ENCODE measurements at regions of chr4 and their contacts with region 1.

Region 1: DNA sequence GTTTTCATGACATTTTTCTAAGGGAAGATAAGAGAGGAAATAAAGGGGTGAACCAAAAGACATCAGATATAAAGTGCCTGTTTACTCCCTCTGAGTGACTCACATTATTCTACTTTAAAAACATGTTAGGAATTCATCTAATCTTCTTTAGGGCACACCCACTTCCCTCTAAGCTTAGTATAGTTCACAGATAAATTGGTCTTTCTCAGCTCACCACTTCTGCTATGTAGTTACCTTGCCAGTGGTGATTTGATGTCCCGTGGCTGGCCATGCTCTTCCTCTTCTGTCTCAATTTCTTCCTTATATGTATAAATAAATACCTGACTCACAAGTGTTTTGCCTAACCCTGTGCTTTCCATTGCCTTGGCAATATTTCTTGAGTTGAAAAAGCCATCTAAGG is 96.8 kb downstream of the PDLIM5 start:
- DNase-seq: peak; percentile 93
- H3K4me3 ChIP-seq: peak overlapping the region in 1 of 3 experiments; percentile 14
- H3K27ac ChIP-seq: peak overlapping the region; percentile 69
- H3K4me1 ChIP-seq: peaks cover 85% of the 10 kb centered on the region
- H3K27me3 ChIP-seq: no peaks in the 10 kb centered on the region
- CTCF ChIP-seq: no peak
- POLR2A ChIP-seq: peak; percentile 38

Region 2: DNA sequence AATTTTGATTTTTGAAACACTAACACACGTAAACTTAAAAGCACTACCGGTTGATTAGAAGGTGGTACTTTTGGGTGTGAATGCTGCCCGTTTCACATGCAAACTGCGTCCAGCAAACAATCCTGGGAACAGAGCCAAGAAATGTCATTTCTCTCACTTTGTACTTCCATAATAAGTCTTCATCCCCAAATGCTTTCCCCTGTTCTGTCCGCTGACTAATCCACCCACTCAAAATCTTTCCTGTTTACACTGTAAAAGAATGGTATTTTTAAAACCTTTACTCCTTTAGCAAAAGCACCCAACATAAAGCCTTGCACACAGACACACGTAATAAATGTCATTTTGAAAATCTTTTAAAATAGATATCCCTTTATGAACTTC is 135.9 kb before region 1 on chr4:
- CTCF ChIA-PET with region 1: interaction called, 9 read pairs
- POLR2A ChIA-PET with region 1: no interaction called
- dilution Hi-C with region 1: no loop called
- intact Hi-C with region 1: loop called (anchors 2 kb)
- DNase-seq: peak; percentile 95
- H3K4me3 ChIP-seq: peak overlapping the region in 1 of 3 experiments; percentile 65
- H3K27ac ChIP-seq: peak overlapping the region; percentile 65
- H3K4me1 ChIP-seq: peaks cover 33% of the 10 kb centered on the region
- H3K27me3 ChIP-seq: no peaks in the 10 kb centered on the region
- CTCF ChIP-seq: no peak
- POLR2A ChIP-seq: no peak

Region 3: GRCh38 chr4:94451695-94452475 is 96.7 kb before region 1 on chr4 and contains the start of gene PDLIM5:
- CTCF ChIA-PET with region 1: interaction called, 8 read pairs
- POLR2A ChIA-PET with region 1: interaction called, 7 read pairs
- dilution Hi-C with region 1: no loop called
- intact Hi-C with region 1: loop called (anchors 1 kb)
- DNase-seq: peak; percentile 93
- H3K4me3 ChIP-seq: peak within 1 kb of the TSS; percentile 60 to 99 (median 98)
- H3K27ac ChIP-seq: peak within 1 kb of the TSS; percentile 80
- H3K4me1 ChIP-seq: peaks cover 40% of the 10 kb centered on the region
- H3K27me3 ChIP-seq: no peaks in the 10 kb centered on the region
- CTCF ChIP-seq: no peak
- POLR2A ChIP-seq: peak; percentile 96
- total RNA-seq, gene PDLIM5: 310 and 323 TPM in 2 replicates

Region 4: DNA sequence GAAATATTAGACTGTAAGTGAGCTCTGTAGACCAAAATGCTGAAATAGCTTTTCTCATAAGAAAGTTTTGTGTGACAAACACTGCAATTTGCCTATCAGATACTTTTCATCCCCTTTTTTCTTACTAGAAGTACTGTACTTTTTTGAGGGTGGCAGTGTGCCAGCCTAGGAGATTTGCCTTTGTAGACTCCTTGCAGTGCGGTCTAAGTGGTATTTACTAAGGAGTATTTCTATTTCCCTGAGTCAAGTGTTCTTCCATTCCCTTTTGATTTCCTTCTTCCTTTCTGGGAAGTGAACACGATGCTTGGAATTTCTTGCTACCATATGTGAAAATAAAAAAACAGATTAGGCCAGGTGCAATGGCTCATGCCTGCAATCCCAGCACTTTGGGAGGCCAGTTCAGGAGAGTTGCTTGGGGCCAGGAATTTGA is 62.2 kb before region 1 on chr4:
- CTCF ChIA-PET with region 1: no interaction called
- POLR2A ChIA-PET with region 1: no interaction called
- dilution Hi-C with region 1: no loop called
- intact Hi-C with region 1: loop called (anchors 1 kb)
- DNase-seq: peak; percentile 82
- H3K4me3 ChIP-seq: no peak overlapping the region
- H3K27ac ChIP-seq: peak overlapping the region; percentile 50
- H3K4me1 ChIP-seq: peaks cover 65% of the 10 kb centered on the region
- H3K27me3 ChIP-seq: no peaks in the 10 kb centered on the region
- CTCF ChIP-seq: no peak
- POLR2A ChIP-seq: no peak

Region 5: DNA sequence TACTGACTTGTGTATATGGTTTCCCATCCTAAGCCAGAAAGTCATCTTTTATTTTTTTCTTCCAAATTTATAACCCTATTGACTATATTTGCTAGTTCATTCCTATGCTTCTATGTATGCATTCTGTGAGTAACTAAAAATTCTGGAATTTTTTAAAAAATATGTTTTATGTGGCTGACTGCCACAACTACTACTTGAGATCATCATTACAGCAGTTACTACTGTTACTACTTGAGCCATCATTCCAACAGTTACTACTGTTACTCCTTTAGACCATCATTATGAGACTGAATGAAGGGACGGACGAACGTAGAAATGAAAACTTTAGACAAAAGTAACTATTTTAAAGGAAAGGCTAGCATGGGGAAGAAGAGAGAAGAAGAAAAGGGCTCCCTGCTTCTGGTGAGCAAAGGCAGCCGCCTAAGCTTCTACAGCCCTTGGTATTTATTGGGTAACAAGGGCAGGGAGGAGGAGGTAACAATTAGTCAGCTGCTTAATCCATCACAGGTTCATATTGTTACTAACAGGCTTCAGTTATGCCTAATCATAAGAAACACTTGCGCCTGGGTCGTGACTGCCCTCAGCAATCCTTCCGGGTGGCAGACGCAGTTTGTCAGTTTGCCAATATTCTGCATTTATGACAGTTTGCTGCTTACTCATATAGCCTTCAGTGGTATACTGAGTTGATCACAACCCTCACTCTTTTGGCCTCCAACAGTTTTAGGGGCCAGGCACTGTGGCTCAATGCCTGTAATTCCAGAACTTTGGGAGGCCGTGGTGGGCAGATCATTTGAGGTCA is 16.4 kb before region 1 on chr4:
- CTCF ChIA-PET with region 1: interaction called, 5 read pairs
- POLR2A ChIA-PET with region 1: interaction called, 3 read pairs
- dilution Hi-C with region 1: no loop called
- intact Hi-C with region 1: loop called (anchors 1 kb)
- DNase-seq: no peak
- H3K4me3 ChIP-seq: no peak overlapping the region
- H3K27ac ChIP-seq: no peak overlapping the region
- H3K4me1 ChIP-seq: peaks cover 61% of the 10 kb centered on the region
- H3K27me3 ChIP-seq: no peaks in the 10 kb centered on the region
- CTCF ChIP-seq: no peak
- POLR2A ChIP-seq: no peak

Region 6: DNA sequence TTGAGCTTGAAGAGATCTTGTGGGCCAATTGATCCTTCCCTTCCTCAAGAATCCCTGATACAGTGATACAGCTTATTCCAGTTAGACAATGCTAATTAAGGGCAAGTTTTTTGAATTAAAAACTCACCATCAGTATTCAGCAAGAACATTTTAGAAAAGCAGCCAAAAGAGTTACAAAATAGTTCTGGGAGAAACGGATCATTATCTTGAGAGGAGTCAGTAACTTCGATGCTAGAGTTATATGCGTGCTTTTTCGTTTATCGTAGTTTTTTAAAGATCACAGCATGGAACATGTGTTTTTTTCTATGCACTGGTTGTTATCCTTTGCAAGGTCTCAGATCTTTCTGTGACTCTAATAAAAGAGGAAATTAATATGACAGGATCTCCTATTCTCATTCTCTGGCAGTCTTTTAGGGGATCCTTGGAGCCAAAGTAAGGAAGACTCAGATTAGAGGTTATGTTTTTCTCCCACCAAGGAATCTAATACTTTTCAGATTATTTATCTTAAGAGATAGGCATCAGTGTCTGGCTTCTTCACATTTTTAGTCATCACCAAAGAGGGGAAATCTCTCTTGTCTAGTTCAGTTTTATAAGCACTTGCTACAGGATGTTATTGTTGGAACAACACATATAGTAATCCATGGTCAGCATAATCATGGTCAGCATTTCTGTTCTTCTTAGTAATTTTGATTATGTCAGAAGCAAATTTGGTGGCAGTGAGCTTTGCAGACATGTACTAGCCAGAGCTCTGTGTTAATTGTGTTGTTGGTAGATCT is 12.9 kb after region 1 on chr4:
- CTCF ChIA-PET with region 1: interaction called, 9 read pairs
- POLR2A ChIA-PET with region 1: interaction called, 5 read pairs
- dilution Hi-C with region 1: no loop called
- intact Hi-C with region 1: loop called (anchors 1 kb)
- DNase-seq: peak; percentile 90
- H3K4me3 ChIP-seq: peak overlapping the region in 1 of 3 experiments; percentile 7
- H3K27ac ChIP-seq: peak overlapping the region; percentile 73
- H3K4me1 ChIP-seq: peaks cover 68% of the 10 kb centered on the region
- H3K27me3 ChIP-seq: no peaks in the 10 kb centered on the region
- CTCF ChIP-seq: no peak
- POLR2A ChIP-seq: peak; percentile 63

Region 7: GRCh38 chr4:94595879-94596483 is 47.4 kb after region 1 on chr4:
- CTCF ChIA-PET with region 1: no interaction called
- POLR2A ChIA-PET with region 1: no interaction called
- dilution Hi-C with region 1: no loop called
- intact Hi-C with region 1: loop called (anchors 2 kb)
- DNase-seq: peak; percentile 76
- H3K4me3 ChIP-seq: no peak overlapping the region
- H3K27ac ChIP-seq: no peak overlapping the region
- H3K4me1 ChIP-seq: peaks cover 11% of the 10 kb centered on the region
- H3K27me3 ChIP-seq: no peaks in the 10 kb centered on the region
- CTCF ChIP-seq: peak; percentile 26 to 28
- POLR2A ChIP-seq: no peak

Region 8: DNA sequence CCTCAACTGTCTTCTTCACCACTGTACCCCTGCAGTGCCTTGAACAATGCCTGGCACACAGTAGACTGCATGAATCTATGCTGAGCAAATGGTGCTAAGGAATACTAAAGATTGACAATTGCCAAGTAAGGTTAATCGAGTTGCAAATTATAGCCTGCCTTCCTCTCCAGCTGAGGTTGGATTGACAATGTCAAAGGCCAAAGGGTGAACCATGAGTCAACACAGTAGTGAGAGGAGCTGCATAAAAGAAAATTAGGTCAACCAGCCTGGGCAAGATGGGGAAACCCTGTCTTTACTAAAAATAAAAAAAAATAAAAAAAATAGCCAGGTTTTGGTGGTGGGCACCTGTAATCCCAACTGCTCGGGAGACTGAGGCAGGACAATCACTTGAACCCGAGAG is 112.0 kb after region 1 on chr4:
- CTCF ChIA-PET with region 1: no interaction called
- POLR2A ChIA-PET with region 1: no interaction called
- dilution Hi-C with region 1: no loop called
- intact Hi-C with region 1: no loop called
- DNase-seq: no peak
- H3K4me3 ChIP-seq: no peak overlapping the region
- H3K27ac ChIP-seq: no peak overlapping the region
- H3K4me1 ChIP-seq: no peaks in the 10 kb centered on the region
- H3K27me3 ChIP-seq: no peaks in the 10 kb centered on the region
- CTCF ChIP-seq: no peak
- POLR2A ChIP-seq: no peak

Region 9: DNA sequence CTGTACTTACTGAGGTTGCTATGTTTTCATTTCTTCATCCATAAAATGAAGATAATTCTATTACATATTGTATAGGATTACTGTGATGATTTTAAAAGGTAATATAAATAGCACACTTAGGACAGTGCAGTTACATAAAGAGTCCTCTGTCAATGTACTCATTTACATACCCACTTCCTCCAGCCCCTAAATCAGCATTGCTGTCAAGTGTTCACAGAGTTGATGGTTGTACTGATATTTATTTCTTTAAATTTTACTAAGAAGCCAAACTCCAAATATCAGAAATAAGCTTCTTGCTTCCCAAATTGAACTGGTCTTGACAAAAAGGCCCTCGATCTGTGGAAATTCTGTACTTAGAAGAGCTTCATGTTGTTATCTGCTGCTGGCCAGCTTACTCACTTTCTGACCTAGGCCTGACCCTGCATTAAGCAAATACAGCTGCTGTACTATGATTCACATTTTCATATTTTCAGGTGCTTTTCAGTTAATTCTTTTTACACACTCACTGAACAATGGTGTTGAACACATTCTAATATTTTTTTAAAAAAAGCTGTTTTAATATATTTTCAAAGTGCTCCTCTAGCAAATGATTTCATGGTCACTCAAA is 740.6 kb after region 1 on chr4:
- CTCF ChIA-PET with region 1: no interaction called
- POLR2A ChIA-PET with region 1: no interaction called
- dilution Hi-C with region 1: no loop called
- intact Hi-C with region 1: no loop called
- DNase-seq: peak; percentile 92
- H3K4me3 ChIP-seq: no peak overlapping the region
- H3K27ac ChIP-seq: peak overlapping the region; percentile 77
- H3K4me1 ChIP-seq: peaks cover 31% of the 10 kb centered on the region
- H3K27me3 ChIP-seq: no peaks in the 10 kb centered on the region
- CTCF ChIP-seq: no peak
- POLR2A ChIP-seq: no peak

Region 10: GRCh38 chr4:96037705-96038104 is 1489.1 kb after region 1 on chr4:
- CTCF ChIA-PET with region 1: no interaction called
- POLR2A ChIA-PET with region 1: no interaction called
- dilution Hi-C with region 1: no loop called
- intact Hi-C with region 1: no loop called
- DNase-seq: no peak
- H3K4me3 ChIP-seq: no peak overlapping the region
- H3K27ac ChIP-seq: no peak overlapping the region
- H3K4me1 ChIP-seq: no peaks in the 10 kb centered on the region
- H3K27me3 ChIP-seq: no peaks in the 10 kb centered on the region
- CTCF ChIP-seq: no peak
- POLR2A ChIP-seq: no peak

Region 11: DNA sequence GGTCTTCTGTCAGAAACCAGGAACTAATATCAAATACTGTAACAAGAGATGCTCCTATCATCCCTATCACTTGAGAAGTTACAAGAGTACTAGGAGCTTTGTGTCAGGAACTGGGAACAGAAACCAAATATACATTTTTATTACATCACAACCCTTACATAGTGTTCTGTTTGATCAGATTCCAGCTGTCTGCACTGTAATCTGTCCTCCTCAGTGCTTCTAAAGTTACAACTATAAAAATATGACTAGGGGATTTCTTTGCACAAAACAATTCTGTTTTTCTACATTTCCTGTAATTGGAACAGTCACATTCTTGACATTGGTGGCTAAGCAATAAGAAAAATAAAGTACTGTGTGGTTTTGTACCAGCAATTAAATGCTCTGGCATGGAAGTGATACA is 1977.3 kb after region 1 on chr4:
- CTCF ChIA-PET with region 1: no interaction called
- POLR2A ChIA-PET with region 1: no interaction called
- dilution Hi-C with region 1: no loop called
- intact Hi-C with region 1: no loop called
- DNase-seq: peak; percentile 28
- H3K4me3 ChIP-seq: no peak overlapping the region
- H3K27ac ChIP-seq: no peak overlapping the region
- H3K4me1 ChIP-seq: no peaks in the 10 kb centered on the region
- H3K27me3 ChIP-seq: no peaks in the 10 kb centered on the region
- CTCF ChIP-seq: no peak
- POLR2A ChIP-seq: no peak